ENCODE measurements at regions of chr13 and their contacts with region 1.

Region 1: GRCh38 chr13:39602614-39603366 is at the start of gene LHFPL6:
- DNase-seq: peak; percentile 81
- H3K4me3 ChIP-seq: peak within 1 kb of the TSS; percentile 63 to 70 (median 69)
- H3K27ac ChIP-seq: peak within 1 kb of the TSS; percentile 56
- H3K4me1 ChIP-seq: peaks cover 20% of the 10 kb centered on the region
- H3K27me3 ChIP-seq: no peaks in the 10 kb centered on the region
- CTCF ChIP-seq: peak; percentile 53 to 56
- POLR2A ChIP-seq: peak; percentile 38
- total RNA-seq, gene LHFPL6: 16.6 and 17.5 TPM in 2 replicates

Region 2: GRCh38 chr13:39037880-39038568 is 564.8 kb before region 1 on chr13 and contains the starts of genes NHLRC3 and PROSER1:
- CTCF ChIA-PET with region 1: no interaction called
- POLR2A ChIA-PET with region 1: no interaction called
- dilution Hi-C with region 1: no loop called
- intact Hi-C with region 1: loop called (anchors 5 kb)
- DNase-seq: peak; percentile 89
- H3K4me3 ChIP-seq: peak within 1 kb of the TSS; percentile 75 to 98 (median 94)
- H3K27ac ChIP-seq: peak within 1 kb of the TSS; percentile 86
- H3K4me1 ChIP-seq: peaks cover 24% of the 10 kb centered on the region
- H3K27me3 ChIP-seq: no peaks in the 10 kb centered on the region
- CTCF ChIP-seq: no peak
- POLR2A ChIP-seq: peak; percentile 45
- total RNA-seq, gene NHLRC3: 10.2 and 11.9 TPM in 2 replicates
- total RNA-seq, gene PROSER1: 40.4 and 44.1 TPM in 2 replicates

Region 3: GRCh38 chr13:39415008-39415802 is 187.6 kb before region 1 on chr13:
- CTCF ChIA-PET with region 1: interaction called, 24 read pairs
- POLR2A ChIA-PET with region 1: interaction called, 4 read pairs
- dilution Hi-C with region 1: no loop called
- intact Hi-C with region 1: loop called (anchors 1 kb)
- DNase-seq: peak; percentile 97
- H3K4me3 ChIP-seq: peak overlapping the region in 1 of 3 experiments; percentile 23
- H3K27ac ChIP-seq: peak overlapping the region; percentile 77
- H3K4me1 ChIP-seq: peaks cover 33% of the 10 kb centered on the region
- H3K27me3 ChIP-seq: no peaks in the 10 kb centered on the region
- CTCF ChIP-seq: peak; percentile 40 to 57
- POLR2A ChIP-seq: no peak

Region 4: GRCh38 chr13:39451860-39452301 is 150.9 kb before region 1 on chr13:
- CTCF ChIA-PET with region 1: no interaction called
- POLR2A ChIA-PET with region 1: no interaction called
- dilution Hi-C with region 1: no loop called
- intact Hi-C with region 1: loop called (anchors 1 kb)
- DNase-seq: peak; percentile 86
- H3K4me3 ChIP-seq: no peak overlapping the region
- H3K27ac ChIP-seq: no peak overlapping the region
- H3K4me1 ChIP-seq: peaks cover 13% of the 10 kb centered on the region
- H3K27me3 ChIP-seq: no peaks in the 10 kb centered on the region
- CTCF ChIP-seq: no peak
- POLR2A ChIP-seq: no peak

Region 5: GRCh38 chr13:39527961-39528660 is 74.7 kb before region 1 on chr13:
- CTCF ChIA-PET with region 1: interaction called, 7 read pairs
- POLR2A ChIA-PET with region 1: no interaction called
- dilution Hi-C with region 1: no loop called
- intact Hi-C with region 1: loop called (anchors 1 kb)
- DNase-seq: peak; percentile 80
- H3K4me3 ChIP-seq: no peak overlapping the region
- H3K27ac ChIP-seq: peak overlapping the region; percentile 66
- H3K4me1 ChIP-seq: peaks cover 15% of the 10 kb centered on the region
- H3K27me3 ChIP-seq: no peaks in the 10 kb centered on the region
- CTCF ChIP-seq: no peak
- POLR2A ChIP-seq: no peak

Region 6: DNA sequence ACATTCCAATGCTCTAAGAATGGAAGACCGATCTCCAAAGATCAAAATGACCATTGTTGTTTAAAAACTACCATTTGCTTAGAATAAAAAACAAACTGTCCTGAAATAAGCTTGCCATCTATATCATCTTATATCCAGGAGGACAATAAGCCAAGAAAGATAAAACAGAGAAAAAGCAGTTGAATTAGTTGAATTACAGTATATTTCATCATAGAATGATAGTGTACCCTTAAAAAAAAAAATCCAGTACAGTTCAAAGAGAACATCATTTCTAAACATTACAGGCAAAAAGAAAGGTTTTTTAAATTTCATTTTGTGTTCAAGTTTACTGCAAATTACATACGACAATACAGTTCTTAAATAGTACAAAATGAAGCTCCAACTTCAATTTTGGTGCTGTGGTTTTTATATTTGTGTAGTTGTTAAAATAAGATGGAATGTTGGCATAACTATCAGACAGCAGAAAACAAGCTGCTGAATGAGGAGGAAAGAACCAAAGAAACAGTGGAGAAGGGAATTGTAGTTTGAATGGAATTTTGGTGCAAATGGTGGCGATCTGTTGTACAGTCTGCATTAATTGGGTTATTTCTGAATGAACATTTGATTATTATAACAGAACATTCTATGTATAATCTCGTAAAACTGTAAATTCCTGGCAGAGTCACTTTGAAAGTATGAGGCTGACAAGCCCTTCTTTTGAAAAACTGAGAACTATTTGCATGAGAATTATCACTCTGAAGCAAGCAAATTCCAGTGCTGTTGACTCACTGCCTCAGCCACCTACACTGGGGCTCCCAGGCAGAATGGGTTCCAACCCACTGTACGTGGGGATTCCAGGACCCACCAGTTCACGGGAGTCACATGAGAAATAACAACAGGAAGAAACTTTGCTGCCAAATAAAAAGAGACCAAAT is 37.5 kb before region 1 on chr13:
- CTCF ChIA-PET with region 1: no interaction called
- POLR2A ChIA-PET with region 1: no interaction called
- dilution Hi-C with region 1: no loop called
- intact Hi-C with region 1: loop called (anchors 2 kb)
- DNase-seq: peak; percentile 70
- H3K4me3 ChIP-seq: peak overlapping the region in 1 of 3 experiments; percentile 32
- H3K27ac ChIP-seq: peak overlapping the region; percentile 49
- H3K4me1 ChIP-seq: peaks cover 14% of the 10 kb centered on the region
- H3K27me3 ChIP-seq: no peaks in the 10 kb centered on the region
- CTCF ChIP-seq: no peak
- POLR2A ChIP-seq: no peak